Tibial artery (tissue), 4 donors: ENCODE measurements at regions of chr5 and their contacts with region 1.

Region 1: GRCh38 chr5:142222866-142223558 is 101.8 kb downstream of the SPRY4 start:
- DNase-seq: peak in 1 of 2 donors; percentile 46
- H3K4me3 ChIP-seq: no peak overlapping the region
- H3K27ac ChIP-seq: no peak overlapping the region
- H3K4me1 ChIP-seq: peaks cover 0 to 10% (median 2%) of the 10 kb centered on the region in 4 donors
- H3K27me3 ChIP-seq: no peaks in the 10 kb centered on the region
- CTCF ChIP-seq: no peak

Region 2: GRCh38 chr5:142233083-142234032 is 10.3 kb after region 1 on chr5:
- intact Hi-C with region 1: loop called (anchors 1 kb)
- DNase-seq: no peak
- H3K4me3 ChIP-seq: no peak overlapping the region
- H3K27ac ChIP-seq: no peak overlapping the region
- H3K4me1 ChIP-seq: peaks cover 0 to 5% (median 0%) of the 10 kb centered on the region in 4 donors
- H3K27me3 ChIP-seq: no peaks in the 10 kb centered on the region
- CTCF ChIP-seq: no peak